ENCODE measurements at regions of chr4 and their contacts with region 1.

Region 1: DNA sequence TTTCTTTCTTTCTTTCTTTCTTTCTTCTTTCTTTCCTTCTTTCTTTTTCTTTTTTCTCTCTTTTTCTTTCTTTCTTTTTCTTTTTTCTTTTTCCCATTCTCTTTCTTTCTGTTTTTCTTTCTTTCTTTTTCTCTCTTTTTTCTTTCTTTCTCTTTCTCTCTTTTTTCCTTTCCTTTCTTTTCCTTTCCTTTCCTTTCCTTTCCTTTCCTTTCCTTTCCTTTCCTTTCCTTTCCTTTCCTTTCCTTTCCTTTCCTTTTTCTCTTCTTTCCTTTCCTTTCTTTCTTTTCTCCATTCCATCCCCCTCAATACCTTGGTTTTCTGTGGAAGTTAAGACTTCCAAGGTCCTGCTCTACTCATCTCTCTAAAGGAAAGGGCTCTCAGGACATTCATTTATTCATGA is 102.8 kb upstream of the CLNK start:
- DNase-seq: no peak
- H3K4me3 ChIP-seq: no peak overlapping the region
- H3K27ac ChIP-seq: no peak overlapping the region
- H3K4me1 ChIP-seq: no peaks in the 10 kb centered on the region
- H3K27me3 ChIP-seq: no peaks in the 10 kb centered on the region
- CTCF ChIP-seq: no peak
- EP300 ChIP-seq: no peak
- POLR2A ChIP-seq: no peak

Region 2: DNA sequence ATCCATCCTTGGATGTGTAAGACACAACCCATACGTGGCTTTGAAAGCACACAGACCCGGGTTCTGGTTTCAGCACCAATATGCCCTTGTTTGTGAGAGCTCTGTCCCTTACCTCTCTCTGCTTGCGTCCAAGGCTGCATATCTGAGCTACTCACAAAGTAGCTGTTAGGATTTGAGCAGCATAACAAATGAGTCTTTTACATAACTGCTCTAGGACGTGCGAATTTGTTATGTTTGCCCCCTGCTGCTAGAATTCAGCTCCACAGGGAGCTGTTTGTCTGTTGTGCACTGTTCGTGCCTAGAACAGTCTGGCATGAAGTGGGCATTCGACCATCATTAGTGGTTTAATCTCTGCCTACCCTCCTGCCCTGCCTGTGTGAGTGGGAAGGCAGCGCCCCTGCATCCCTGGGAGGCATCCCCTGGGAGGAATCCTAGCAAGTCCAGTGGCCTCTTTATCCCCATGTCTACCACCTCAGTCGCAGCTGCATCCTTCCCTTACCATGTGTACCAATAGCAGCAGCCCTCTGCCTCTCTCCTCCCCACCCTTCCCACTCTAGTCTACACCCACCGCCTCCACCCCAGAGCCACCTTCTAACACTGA is 808.2 kb before region 1 on chr4:
- intact Hi-C with region 1: loop called in 1 of 4 experiments (anchors 5 kb)
- DNase-seq: no peak
- H3K4me3 ChIP-seq: no peak overlapping the region
- H3K27ac ChIP-seq: no peak overlapping the region
- H3K4me1 ChIP-seq: peaks cover 3% of the 10 kb centered on the region
- H3K27me3 ChIP-seq: no peaks in the 10 kb centered on the region
- CTCF ChIP-seq: no peak
- EP300 ChIP-seq: no peak
- POLR2A ChIP-seq: no peak